Left cardiac atrium (tissue), 4 donors: ENCODE measurements at regions of chr6 and their contacts with region 1.

Region 1: DNA sequence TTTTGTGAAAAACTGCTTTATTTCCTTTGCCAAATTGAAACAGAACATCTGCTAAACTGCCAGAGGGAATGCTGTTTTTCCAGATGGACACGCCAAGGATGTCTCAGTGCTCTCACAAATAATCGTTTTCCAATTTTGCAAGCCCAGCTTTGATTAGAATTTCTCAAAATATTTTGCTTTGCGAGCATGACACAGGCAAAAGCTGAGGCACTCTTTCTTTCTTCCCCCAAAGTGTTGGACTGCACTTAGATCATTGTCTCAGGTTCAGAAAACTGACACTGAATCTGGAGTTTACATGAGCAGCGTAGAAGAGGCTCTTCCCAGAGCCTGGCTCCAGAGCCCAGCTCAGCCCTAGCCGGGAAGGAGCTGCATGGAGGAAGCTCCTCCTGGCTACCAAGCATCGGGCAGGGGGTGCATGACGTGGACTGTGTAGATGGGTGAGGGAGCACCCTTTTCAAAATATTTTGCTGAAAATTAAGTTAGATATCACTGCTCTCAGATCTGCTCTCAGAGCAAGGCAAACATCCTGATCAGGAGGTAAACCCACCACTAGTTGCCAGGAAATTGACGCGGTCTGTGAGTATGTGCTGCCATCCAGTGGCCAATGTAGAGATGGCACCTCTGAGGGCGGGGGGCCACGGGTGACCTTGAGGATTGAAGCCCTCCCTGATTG is 107.5 kb downstream of the SLC22A3 start:
- DNase-seq: peak; percentile 50
- ATAC-seq: peak; percentile 86 to 87

Region 2: GRCh38 chr6:160088069-160088783 is 367.5 kb before region 1 on chr6:
- intact Hi-C with region 1: loop called in 1 of 2 experiments (anchors 5 kb)
- DNase-seq: peak; percentile 64
- ATAC-seq: peak; percentile 72 to 78

Region 3: GRCh38 chr6:160137989-160138835 is 317.5 kb before region 1 on chr6:
- intact Hi-C with region 1: loop called (anchors 1 to 5 kb)
- DNase-seq: no peak
- ATAC-seq: peak; percentile 52 to 69

Region 4: GRCh38 chr6:160534050-160534696 is 78.5 kb after region 1 on chr6:
- intact Hi-C with region 1: loop called in 1 of 2 experiments (anchors 2 kb)
- DNase-seq: peak; percentile 43
- ATAC-seq: peak; percentile 30 to 71